CD4-positive, alpha-beta memory T cell (primary cell): ENCODE measurements at regions of chr5 and their contacts with region 1.

Region 1: GRCh38 chr5:52787600-52788504 is at the starts of genes ITGA1 and PELO:
- DNase-seq: peak; percentile 49 to 64 (median 53)
- H3K4me3 ChIP-seq: peak within 1 kb of the TSS; percentile 55 to 65
- H3K4me3 Mint-ChIP-seq: peak within 1 kb of the TSS; percentile 89 to 95 (median 92)
- H3K27ac ChIP-seq: peak within 1 kb of the TSS; percentile 60
- H3K27ac Mint-ChIP-seq: peak within 1 kb of the TSS; percentile 42 to 89 (median 59)
- H3K4me1 ChIP-seq: peaks cover 15% of the 10 kb centered on the region
- H3K4me1 Mint-ChIP-seq: peaks cover 17 to 36% (median 29%) of the 10 kb centered on the region in 4 donors
- H3K27me3 ChIP-seq: no peaks in the 10 kb centered on the region
- H3K27me3 Mint-ChIP-seq: peaks cover 2% of the 10 kb centered on the region in 2 donors
- total RNA-seq, gene ITGA1: 4.2 to 5.8 TPM
- total RNA-seq, gene PELO: 11.9 to 12.4 TPM

Region 2: GRCh38 chr5:52693280-52693679 is 94.6 kb before region 1 on chr5:
- CTCF ChIA-PET with region 1: interaction called, 35 read pairs
- POLR2A ChIA-PET with region 1: interaction called, 6 read pairs
- intact Hi-C with region 1: loop called (anchors 1 kb)
- DNase-seq: peak in 4 of 5 donors; percentile 23 to 32 (median 28)
- H3K4me3 ChIP-seq: no peak overlapping the region
- H3K4me3 Mint-ChIP-seq: no peak overlapping the region
- H3K27ac ChIP-seq: no peak overlapping the region
- H3K27ac Mint-ChIP-seq: no peak overlapping the region
- H3K4me1 ChIP-seq: no peaks in the 10 kb centered on the region
- H3K4me1 Mint-ChIP-seq: peaks cover 4 to 7% (median 5%) of the 10 kb centered on the region in 4 donors
- H3K27me3 ChIP-seq: no peaks in the 10 kb centered on the region
- H3K27me3 Mint-ChIP-seq: no peaks in the 10 kb centered on the region

Region 3: DNA sequence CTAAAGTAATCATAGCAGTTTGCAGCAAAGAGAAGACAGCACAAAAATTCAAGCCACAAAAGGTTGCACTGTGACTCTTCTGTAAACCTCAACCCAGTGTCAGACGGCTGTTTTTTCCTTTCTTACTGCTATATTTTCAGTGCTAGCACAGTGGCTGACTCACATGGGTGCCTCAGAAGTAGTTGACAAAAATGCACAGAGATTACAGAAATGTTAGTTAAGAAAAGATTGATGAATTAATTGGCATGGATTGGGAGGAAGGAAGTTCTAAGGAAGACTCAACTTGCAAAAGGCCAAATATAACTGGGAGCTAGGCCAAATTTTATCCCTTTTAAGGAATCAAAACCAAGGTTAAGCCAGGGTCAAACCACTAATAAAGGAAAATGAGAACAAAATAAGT is 43.9 kb before region 1 on chr5:
- CTCF ChIA-PET with region 1: interaction called, 3 read pairs
- POLR2A ChIA-PET with region 1: interaction called, 6 read pairs
- intact Hi-C with region 1: loop called (anchors 5 kb)
- DNase-seq: peak; percentile 40 to 59 (median 52)
- H3K4me3 ChIP-seq: no peak overlapping the region
- H3K4me3 Mint-ChIP-seq: peak overlapping the region; percentile 26 to 79 (median 68)
- H3K27ac ChIP-seq: peak overlapping the region; percentile 34
- H3K27ac Mint-ChIP-seq: peak overlapping the region; percentile 45 to 97 (median 90)
- H3K4me1 ChIP-seq: peaks cover 45% of the 10 kb centered on the region
- H3K4me1 Mint-ChIP-seq: peaks cover 40 to 69% (median 49%) of the 10 kb centered on the region in 4 donors
- H3K27me3 ChIP-seq: no peaks in the 10 kb centered on the region
- H3K27me3 Mint-ChIP-seq: no peaks in the 10 kb centered on the region

Region 4: DNA sequence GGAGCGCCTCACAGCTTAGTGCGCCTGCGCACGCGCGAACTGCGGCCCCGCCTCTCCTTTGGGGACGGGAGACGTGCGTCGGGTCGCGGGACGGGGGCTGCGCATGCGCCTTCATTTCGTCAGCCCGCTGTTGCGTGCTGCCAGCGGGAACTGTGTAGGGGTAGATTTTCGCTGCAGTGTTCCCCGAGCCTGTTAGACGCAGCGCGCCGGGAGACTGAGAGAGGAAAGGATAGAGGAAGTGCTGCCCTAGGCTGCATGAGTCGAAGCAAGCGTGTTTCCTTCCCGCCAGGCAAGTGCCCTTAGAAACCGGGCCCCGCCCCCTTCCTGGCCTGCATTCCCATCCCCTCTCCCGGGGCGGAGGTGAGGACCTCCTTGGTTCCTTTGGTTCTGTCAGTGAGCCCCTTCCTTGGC is 12.1 kb after region 1 on chr5:
- CTCF ChIA-PET with region 1: interaction called, 20 read pairs
- POLR2A ChIA-PET with region 1: interaction called, 27 read pairs
- intact Hi-C with region 1: loop called (anchors 1 kb)
- DNase-seq: peak; percentile 92 to 95 (median 94)
- H3K4me3 ChIP-seq: peak overlapping the region; percentile 78 to 98
- H3K4me3 Mint-ChIP-seq: peak overlapping the region; percentile 93 to 99 (median 98)
- H3K27ac ChIP-seq: peak overlapping the region; percentile 72
- H3K27ac Mint-ChIP-seq: peak overlapping the region; percentile 90 to 99 (median 96)
- H3K4me1 ChIP-seq: peaks cover 49% of the 10 kb centered on the region
- H3K4me1 Mint-ChIP-seq: peaks cover 37 to 67% (median 49%) of the 10 kb centered on the region in 4 donors
- H3K27me3 ChIP-seq: no peaks in the 10 kb centered on the region
- H3K27me3 Mint-ChIP-seq: no peaks in the 10 kb centered on the region

Region 5: GRCh38 chr5:52810426-52810825 is 22.6 kb after region 1 on chr5:
- CTCF ChIA-PET with region 1: no interaction called
- POLR2A ChIA-PET with region 1: no interaction called
- intact Hi-C with region 1: no loop called
- DNase-seq: no peak
- H3K4me3 ChIP-seq: no peak overlapping the region
- H3K4me3 Mint-ChIP-seq: no peak overlapping the region
- H3K27ac ChIP-seq: no peak overlapping the region
- H3K27ac Mint-ChIP-seq: no peak overlapping the region
- H3K4me1 ChIP-seq: no peaks in the 10 kb centered on the region
- H3K4me1 Mint-ChIP-seq: peaks cover 0 to 4% (median 4%) of the 10 kb centered on the region in 4 donors
- H3K27me3 ChIP-seq: no peaks in the 10 kb centered on the region
- H3K27me3 Mint-ChIP-seq: peaks cover 0 to 2% of the 10 kb centered on the region in 2 donors

Region 6: DNA sequence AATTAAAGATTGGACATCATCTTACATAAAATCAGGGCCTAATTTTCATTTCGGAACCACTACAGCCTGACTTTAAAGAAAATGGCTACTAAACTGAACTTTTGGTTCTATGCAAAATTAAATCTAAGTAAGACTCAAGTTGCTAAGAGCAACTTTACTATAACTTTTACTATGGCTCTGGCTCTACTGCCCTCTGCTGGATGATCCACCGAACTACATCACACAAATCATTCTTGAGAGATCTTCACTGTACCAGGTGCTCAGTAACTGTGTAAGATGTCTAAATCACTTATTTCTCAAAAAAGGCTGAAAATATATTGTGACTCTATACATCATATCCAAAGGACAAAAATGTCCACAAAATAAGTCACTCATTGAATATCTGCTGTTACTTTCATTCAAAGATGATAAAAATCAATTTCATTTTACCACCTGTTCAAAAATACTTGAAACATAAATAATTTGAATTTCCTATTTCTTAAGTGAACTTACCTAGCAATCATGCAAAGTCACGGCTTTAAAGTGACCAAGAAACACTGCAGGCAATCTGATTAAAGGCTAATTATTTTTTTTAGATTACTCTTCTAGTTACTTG is 308.2 kb after region 1 on chr5:
- CTCF ChIA-PET with region 1: no interaction called
- POLR2A ChIA-PET with region 1: no interaction called
- intact Hi-C with region 1: loop called (anchors 1 kb)
- DNase-seq: peak; percentile 58 to 67 (median 59)
- H3K4me3 ChIP-seq: no peak overlapping the region
- H3K4me3 Mint-ChIP-seq: no peak overlapping the region
- H3K27ac ChIP-seq: no peak overlapping the region
- H3K27ac Mint-ChIP-seq: no peak overlapping the region
- H3K4me1 ChIP-seq: no peaks in the 10 kb centered on the region
- H3K4me1 Mint-ChIP-seq: no peaks in the 10 kb centered on the region
- H3K27me3 ChIP-seq: no peaks in the 10 kb centered on the region
- H3K27me3 Mint-ChIP-seq: no peaks in the 10 kb centered on the region